ENCODE measurements at regions of chr19 and their contacts with region 1.

Region 1: GRCh38 chr19:17075035-17075863 is at the starts of genes HAUS8 and MYO9B:
- DNase-seq: peak; percentile 99
- ATAC-seq: peak; percentile 90
- H3K4me3 Mint-ChIP-seq: peak within 1 kb of the TSS; percentile 98
- H3K27ac Mint-ChIP-seq: peak within 1 kb of the TSS; percentile 98
- H3K4me1 Mint-ChIP-seq: peaks cover 54% of the 10 kb centered on the region
- H3K27me3 Mint-ChIP-seq: no peaks in the 10 kb centered on the region
- CTCF ChIP-seq: no peak
- total RNA-seq, gene HAUS8: 40.7 to 41.9 TPM
- total RNA-seq, gene MYO9B: 111 to 112 TPM

Region 2: GRCh38 chr19:17090583-17090982 is 15.3 kb after region 1 on chr19:
- CTCF ChIA-PET with region 1: no interaction called
- POLR2A ChIA-PET with region 1: interaction called, 11 read pairs
- intact Hi-C with region 1: no loop called
- DNase-seq: peak; percentile 82
- ATAC-seq: peak; percentile 92
- H3K4me3 Mint-ChIP-seq: peak overlapping the region; percentile 4
- H3K27ac Mint-ChIP-seq: peak overlapping the region; percentile 85
- H3K4me1 Mint-ChIP-seq: peaks cover 46% of the 10 kb centered on the region
- H3K27me3 Mint-ChIP-seq: no peaks in the 10 kb centered on the region
- CTCF ChIP-seq: no peak

Region 3: DNA sequence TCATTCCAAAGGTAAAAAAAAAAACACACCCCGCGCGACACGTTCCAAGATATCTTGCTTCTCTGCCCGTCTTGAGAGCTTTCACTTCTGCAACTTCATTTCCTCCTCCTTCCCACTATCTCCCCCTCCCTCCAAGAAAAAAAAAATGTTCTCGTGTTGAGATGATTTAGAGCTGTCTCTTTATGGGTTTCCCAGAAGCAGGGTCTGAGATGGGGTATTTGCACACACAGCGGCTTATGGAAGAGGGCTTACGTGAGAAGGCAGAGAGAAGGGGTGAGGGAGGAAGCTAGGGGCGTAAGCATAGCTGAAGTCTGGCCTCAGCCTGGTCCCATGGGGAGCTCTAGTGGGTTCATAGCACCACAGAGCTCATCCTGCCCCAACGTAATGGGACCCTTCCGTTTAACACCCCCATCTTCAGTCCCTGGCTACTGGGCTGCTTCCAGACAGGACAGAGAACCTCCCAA is 108.6 kb after region 1 on chr19:
- CTCF ChIA-PET with region 1: interaction called, 3 read pairs
- POLR2A ChIA-PET with region 1: interaction called, 13 read pairs
- intact Hi-C with region 1: no loop called
- DNase-seq: peak; percentile 42
- ATAC-seq: peak; percentile 67
- H3K4me3 Mint-ChIP-seq: peak overlapping the region; percentile 72
- H3K27ac Mint-ChIP-seq: peak overlapping the region; percentile 97
- H3K4me1 Mint-ChIP-seq: peaks cover 20% of the 10 kb centered on the region
- H3K27me3 Mint-ChIP-seq: no peaks in the 10 kb centered on the region
- CTCF ChIP-seq: no peak

Region 4: GRCh38 chr19:17195106-17195505 is 119.9 kb after region 1 on chr19:
- CTCF ChIA-PET with region 1: no interaction called
- POLR2A ChIA-PET with region 1: no interaction called
- intact Hi-C with region 1: no loop called
- DNase-seq: no peak
- ATAC-seq: no peak
- H3K4me3 Mint-ChIP-seq: no peak overlapping the region
- H3K27ac Mint-ChIP-seq: no peak overlapping the region
- H3K4me1 Mint-ChIP-seq: no peaks in the 10 kb centered on the region
- H3K27me3 Mint-ChIP-seq: no peaks in the 10 kb centered on the region
- CTCF ChIP-seq: no peak

Region 5: DNA sequence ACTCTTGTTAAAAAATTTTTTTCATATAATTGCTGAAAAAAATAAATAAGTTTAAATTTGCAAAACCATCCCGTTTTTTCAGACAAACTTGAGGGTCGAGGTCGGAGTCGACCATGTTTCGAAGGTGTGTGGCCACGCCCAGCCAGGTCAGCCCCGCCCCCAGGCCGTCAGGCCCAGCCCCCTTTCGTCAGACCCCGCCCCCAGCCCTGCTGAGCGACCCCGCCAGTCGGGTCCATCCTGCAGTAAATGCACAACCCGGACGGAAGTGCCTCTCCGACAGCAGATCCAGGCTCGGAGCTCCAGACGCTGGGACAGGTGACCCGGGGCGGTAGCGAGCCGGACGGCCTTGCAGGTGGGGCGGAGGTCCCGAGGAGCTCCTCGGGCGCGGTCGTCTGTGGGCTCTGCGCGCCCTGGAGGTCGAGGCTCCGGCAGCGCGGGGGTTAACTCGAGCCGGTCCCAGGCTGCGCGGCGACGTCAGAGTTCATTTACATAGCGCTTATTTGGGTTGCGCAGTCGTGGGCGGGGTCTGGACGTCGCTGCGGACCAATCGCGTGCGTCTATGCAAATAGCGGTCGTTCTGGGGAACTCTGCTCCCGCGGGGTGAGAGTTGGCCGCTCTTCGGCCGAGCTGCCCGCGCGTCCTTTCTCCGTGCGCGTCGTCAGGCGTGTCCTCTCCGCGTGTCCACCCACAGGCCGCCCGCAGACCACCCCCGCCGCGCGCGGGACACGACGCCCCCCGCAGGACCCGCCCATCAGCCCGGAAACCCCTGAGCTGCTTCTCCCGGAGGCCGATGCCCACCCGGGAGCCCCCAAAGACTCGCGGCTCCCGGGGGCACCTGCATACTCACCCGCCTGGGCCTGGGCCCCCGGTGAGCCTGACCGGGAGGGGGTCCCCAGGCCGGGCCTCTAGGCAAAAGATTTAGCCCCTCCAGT is 151.0 kb after region 1 on chr19 and contains the start of gene OCEL1:
- CTCF ChIA-PET with region 1: no interaction called
- POLR2A ChIA-PET with region 1: interaction called, 3 read pairs
- intact Hi-C with region 1: loop called (anchors 10 kb)
- DNase-seq: peak; percentile 99
- ATAC-seq: peak; percentile 92
- H3K4me3 Mint-ChIP-seq: peak within 1 kb of the TSS; percentile 80
- H3K27ac Mint-ChIP-seq: peak within 1 kb of the TSS; percentile 95
- H3K4me1 Mint-ChIP-seq: peaks cover 4% of the 10 kb centered on the region
- H3K27me3 Mint-ChIP-seq: no peaks in the 10 kb centered on the region
- CTCF ChIP-seq: no peak
- total RNA-seq, gene OCEL1: 20.1 TPM